ENCODE measurements at regions of chr19 and their contacts with region 1.

Region 1: DNA sequence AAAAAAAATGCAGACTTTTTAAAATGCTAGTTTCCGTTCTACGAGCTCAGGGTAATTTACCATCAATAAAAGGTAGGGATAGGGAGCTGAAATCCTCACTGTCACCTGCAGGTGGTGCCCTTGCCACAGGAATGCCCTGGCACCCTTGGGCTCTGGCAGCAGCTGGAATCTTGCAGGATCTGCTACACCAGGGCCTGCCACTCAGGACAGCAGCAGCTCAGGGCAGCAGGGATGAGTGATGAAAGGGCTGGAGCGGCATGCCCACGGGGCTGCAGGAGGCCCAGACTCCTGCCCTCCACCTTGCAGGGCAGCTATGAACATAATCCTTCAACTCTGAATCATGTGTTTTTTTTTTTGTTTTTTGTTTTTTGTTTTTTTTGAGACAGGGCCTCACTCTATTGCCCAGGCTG is 54.0 kb downstream of the GNG7 start:
- DNase-seq: peak; percentile 80
- ATAC-seq: peak; percentile 91
- H3K4me3 Mint-ChIP-seq: no peak overlapping the region
- H3K27ac Mint-ChIP-seq: no peak overlapping the region
- H3K4me1 Mint-ChIP-seq: no peaks in the 10 kb centered on the region
- H3K27me3 Mint-ChIP-seq: no peaks in the 10 kb centered on the region

Region 2: GRCh38 chr19:2627319-2627829 is 21.2 kb before region 1 on chr19:
- CTCF ChIA-PET with region 1: interaction called, 12 read pairs
- POLR2A ChIA-PET with region 1: no interaction called
- DNase-seq: no peak
- ATAC-seq: no peak
- H3K4me3 Mint-ChIP-seq: no peak overlapping the region
- H3K27ac Mint-ChIP-seq: peak overlapping the region; percentile 36
- H3K4me1 Mint-ChIP-seq: peaks cover 39% of the 10 kb centered on the region
- H3K27me3 Mint-ChIP-seq: no peaks in the 10 kb centered on the region

Region 3: DNA sequence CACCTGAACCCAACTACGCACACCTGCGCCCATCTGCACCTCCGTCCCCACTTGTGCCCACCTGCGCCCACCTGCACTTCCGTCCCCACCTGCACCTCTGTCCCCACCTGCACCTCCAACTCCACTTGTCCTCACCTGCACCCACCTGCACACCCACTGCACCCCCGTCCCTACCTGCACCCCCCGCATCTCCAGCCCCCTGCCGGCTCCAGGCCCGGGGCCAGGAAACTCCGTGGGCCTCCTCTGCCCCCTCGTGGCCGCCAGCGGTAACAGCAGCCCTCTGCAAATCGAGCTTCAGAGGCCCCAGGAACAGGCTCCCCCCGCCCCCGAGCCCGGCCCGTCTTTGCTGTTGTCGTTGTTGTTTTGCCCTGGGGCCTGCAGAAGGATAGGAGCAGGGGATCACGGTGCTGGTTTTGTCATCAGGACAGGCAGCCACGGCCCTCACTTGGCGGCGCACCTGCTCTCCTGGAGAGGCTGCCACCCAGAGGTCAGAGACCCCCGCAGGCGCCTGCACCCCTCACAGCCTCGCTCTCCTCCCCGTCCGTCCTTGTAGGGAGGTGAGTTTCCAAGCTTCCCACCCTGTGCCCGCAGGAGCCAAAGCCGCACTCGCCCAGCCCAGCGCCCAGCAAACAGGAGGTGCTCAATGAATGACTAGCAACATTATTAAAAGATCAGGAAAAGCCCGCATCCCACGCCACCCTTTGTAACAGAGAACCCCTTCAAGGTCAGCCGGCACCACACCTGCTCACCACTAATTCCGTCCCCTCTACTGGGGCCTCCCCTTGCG is 11.4 kb before region 1 on chr19:
- CTCF ChIA-PET with region 1: interaction called, 16 read pairs
- POLR2A ChIA-PET with region 1: no interaction called
- DNase-seq: peak; percentile 84
- ATAC-seq: peak; percentile 84
- H3K4me3 Mint-ChIP-seq: no peak overlapping the region
- H3K27ac Mint-ChIP-seq: no peak overlapping the region
- H3K4me1 Mint-ChIP-seq: peaks cover 14% of the 10 kb centered on the region
- H3K27me3 Mint-ChIP-seq: peaks cover 4% of the 10 kb centered on the region

Region 4: GRCh38 chr19:2661615-2662014 is 13.1 kb after region 1 on chr19:
- CTCF ChIA-PET with region 1: interaction called, 10 read pairs
- POLR2A ChIA-PET with region 1: no interaction called
- DNase-seq: peak; percentile 30
- ATAC-seq: no peak
- H3K4me3 Mint-ChIP-seq: no peak overlapping the region
- H3K27ac Mint-ChIP-seq: no peak overlapping the region
- H3K4me1 Mint-ChIP-seq: no peaks in the 10 kb centered on the region
- H3K27me3 Mint-ChIP-seq: no peaks in the 10 kb centered on the region

Region 5: GRCh38 chr19:2750808-2751443 is 102.4 kb after region 1 on chr19:
- CTCF ChIA-PET with region 1: interaction called, 43 read pairs
- POLR2A ChIA-PET with region 1: interaction called, 3 read pairs
- DNase-seq: no peak
- ATAC-seq: no peak
- H3K4me3 Mint-ChIP-seq: no peak overlapping the region
- H3K27ac Mint-ChIP-seq: no peak overlapping the region
- H3K4me1 Mint-ChIP-seq: no peaks in the 10 kb centered on the region
- H3K27me3 Mint-ChIP-seq: no peaks in the 10 kb centered on the region